ENCODE measurements at regions of chr10 and their contacts with region 1.

Region 1: DNA sequence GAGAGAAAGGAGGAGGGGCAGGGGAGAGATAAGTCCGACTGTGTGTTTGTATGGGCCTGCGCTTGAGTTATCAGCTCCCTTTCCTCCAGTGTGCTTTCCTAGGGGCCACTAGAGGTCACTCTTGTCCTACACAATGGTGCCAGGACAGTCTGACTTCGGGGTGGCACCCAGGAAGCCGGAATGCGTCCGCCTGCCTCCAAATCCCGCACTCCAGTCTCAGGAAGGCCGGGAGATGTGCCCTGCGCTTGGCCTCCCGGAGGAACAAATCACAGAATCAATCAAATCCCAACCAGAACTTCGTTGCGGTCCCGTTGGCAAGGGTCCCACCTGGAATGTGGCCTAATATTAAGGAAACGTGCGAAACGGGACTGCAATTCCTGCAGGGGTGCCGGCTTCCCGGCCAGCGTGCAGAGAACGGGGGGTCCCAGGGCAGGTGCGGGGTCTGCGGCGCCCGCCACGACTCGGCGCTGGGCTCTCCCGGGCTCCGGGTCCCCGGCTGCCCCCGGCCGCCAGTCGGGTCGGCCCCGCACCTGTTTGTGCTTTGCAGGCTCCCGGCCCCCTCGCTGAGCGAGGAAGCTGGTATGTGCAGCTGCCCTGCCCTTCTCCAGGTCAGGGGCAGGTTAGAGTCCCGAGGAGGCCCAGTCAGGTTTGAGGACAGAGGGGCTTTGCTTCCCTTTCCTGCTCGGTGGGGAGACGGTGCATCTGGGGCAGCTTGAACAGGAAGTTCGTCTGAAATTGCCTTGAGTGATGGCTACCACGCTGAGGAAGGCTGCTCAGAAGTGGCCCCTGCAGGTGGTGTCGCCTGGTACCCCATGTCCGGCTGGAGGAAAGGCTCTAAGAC is 21.0 kb upstream of the HPS1 start:
- DNase-seq: peak; percentile 56
- H3K4me3 ChIP-seq: peak overlapping the region in 2 of 3 experiments; percentile 27 to 45
- H3K27ac ChIP-seq: no peak overlapping the region
- H3K4me1 ChIP-seq: peaks cover 3% of the 10 kb centered on the region
- H3K27me3 ChIP-seq: no peaks in the 10 kb centered on the region
- CTCF ChIP-seq: peak; percentile 71 to 80
- POLR2A ChIP-seq: no peak

Region 2: GRCh38 chr10:98262571-98262970 is 205.2 kb before region 1 on chr10:
- CTCF ChIA-PET with region 1: interaction called, 12 read pairs
- POLR2A ChIA-PET with region 1: no interaction called
- dilution Hi-C with region 1: no loop called
- intact Hi-C with region 1: loop called (anchors 1 kb)
- DNase-seq: peak; percentile 38
- H3K4me3 ChIP-seq: no peak overlapping the region
- H3K27ac ChIP-seq: no peak overlapping the region
- H3K4me1 ChIP-seq: no peaks in the 10 kb centered on the region
- H3K27me3 ChIP-seq: no peaks in the 10 kb centered on the region
- CTCF ChIP-seq: peak; percentile 38 to 60
- POLR2A ChIP-seq: no peak

Region 3: DNA sequence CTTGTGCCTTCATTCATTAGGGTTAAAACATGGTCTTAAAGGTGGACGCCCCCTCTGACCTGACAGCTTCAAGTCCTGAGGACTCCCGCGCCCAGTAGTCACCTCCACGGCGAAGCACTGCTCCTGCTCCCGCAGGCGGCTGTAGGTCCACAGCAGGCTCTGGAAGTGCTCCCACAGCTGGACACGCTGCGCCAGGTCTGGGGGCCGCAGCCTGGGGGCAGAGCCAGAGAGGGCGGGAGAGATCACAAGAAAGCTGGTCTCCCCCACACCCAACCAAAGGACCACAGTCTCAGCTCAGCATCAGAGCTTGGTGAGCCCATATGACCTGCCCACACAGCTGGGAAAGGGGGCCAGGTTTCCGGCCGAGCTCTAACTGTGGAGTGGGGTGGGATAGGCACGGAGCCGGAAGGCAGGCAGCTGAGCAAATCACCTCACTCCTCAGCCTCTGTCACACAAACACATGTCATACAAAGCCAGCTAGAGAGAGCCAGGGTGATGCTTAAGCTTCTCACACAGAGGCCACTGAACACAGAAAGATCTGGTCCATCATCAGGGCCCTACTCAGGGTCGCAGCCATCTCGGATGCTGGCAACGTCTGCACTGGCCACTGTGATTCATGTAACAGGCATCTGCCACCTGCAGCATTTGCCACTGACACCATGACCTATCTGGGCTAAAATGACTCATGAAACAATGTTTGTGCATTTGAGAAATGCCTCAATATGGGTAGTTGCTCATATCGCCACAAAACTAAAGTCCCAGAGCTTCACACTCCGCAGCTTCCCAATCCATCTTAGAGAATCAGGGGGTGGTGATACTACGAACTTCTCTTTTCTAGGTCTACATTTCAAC is 33.6 kb before region 1 on chr10:
- CTCF ChIA-PET with region 1: interaction called, 19 read pairs
- POLR2A ChIA-PET with region 1: no interaction called
- dilution Hi-C with region 1: no loop called
- intact Hi-C with region 1: no loop called
- DNase-seq: peak; percentile 47
- H3K4me3 ChIP-seq: no peak overlapping the region
- H3K27ac ChIP-seq: peak overlapping the region; percentile 74
- H3K4me1 ChIP-seq: peaks cover 13% of the 10 kb centered on the region
- H3K27me3 ChIP-seq: no peaks in the 10 kb centered on the region
- CTCF ChIP-seq: no peak
- POLR2A ChIP-seq: no peak

Region 4: GRCh38 chr10:98664331-98665042 is 196.8 kb after region 1 on chr10:
- CTCF ChIA-PET with region 1: interaction called, 48 read pairs
- POLR2A ChIA-PET with region 1: no interaction called
- dilution Hi-C with region 1: no loop called
- intact Hi-C with region 1: loop called (anchors 1 kb)
- DNase-seq: peak; percentile 18
- H3K4me3 ChIP-seq: no peak overlapping the region
- H3K27ac ChIP-seq: no peak overlapping the region
- H3K4me1 ChIP-seq: no peaks in the 10 kb centered on the region
- H3K27me3 ChIP-seq: peaks cover 0 to 1% of the 10 kb centered on the region in 2 experiments
- CTCF ChIP-seq: peak; percentile 64 to 70
- POLR2A ChIP-seq: no peak

Region 5: DNA sequence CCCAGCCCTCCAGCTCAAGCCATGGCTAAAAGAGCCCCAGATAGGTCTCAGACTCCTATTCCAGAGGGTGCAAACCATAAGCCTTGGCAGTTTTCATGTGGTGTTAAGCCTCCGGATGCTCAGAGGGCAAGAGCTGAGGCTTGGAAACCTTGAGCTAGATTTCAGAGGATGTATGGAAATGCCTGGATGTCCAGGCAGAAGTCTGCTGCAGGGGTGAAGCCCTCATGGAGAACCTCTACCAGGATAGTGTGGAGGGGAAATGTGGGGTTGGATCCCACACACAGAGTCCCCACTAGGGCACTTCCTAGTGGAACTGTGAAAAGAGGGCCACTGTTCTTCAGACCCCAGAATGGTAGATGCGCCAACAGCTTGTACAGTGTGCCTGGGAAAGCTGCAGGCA is 781.1 kb after region 1 on chr10:
- CTCF ChIA-PET with region 1: interaction called, 220 read pairs
- POLR2A ChIA-PET with region 1: no interaction called
- dilution Hi-C with region 1: no loop called
- intact Hi-C with region 1: loop called (anchors 1 kb)
- DNase-seq: no peak
- H3K4me3 ChIP-seq: no peak overlapping the region
- H3K27ac ChIP-seq: no peak overlapping the region
- H3K4me1 ChIP-seq: no peaks in the 10 kb centered on the region
- H3K27me3 ChIP-seq: no peaks in the 10 kb centered on the region
- CTCF ChIP-seq: no peak
- POLR2A ChIP-seq: no peak

Region 6: DNA sequence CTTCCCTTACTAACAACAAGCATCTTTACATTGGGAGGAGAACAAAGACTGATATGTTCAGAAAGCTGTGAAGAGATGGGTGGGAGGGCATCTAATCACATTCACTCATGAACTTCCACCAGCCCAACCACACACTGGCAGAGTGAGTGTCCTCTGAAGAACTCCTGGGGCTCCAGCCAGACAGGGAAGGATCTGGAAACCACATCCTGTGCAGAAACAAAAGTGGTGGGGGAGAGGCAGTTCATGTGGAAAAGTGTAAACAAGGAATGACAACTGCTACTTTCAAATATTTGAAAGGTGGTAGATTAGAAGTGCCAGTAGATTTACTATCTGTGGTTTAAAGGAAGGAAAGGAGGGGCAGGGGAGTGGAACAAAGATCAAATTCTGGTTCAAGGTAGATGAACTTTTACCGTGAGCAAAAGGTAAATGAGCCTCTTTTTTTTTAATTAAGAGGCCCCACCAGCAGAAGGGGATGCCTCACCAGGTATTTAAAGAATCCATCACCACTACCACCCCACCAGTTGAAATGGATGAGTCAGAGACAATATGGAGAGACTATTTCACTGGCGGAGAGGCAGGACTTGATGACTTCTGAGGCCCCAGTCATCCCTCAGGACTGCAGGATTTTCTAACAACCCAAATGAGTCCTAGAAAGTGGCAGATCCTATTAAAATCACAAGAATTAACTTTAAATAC is 928.2 kb after region 1 on chr10:
- CTCF ChIA-PET with region 1: no interaction called
- POLR2A ChIA-PET with region 1: no interaction called
- dilution Hi-C with region 1: no loop called
- intact Hi-C with region 1: loop called (anchors 10 kb)
- DNase-seq: peak; percentile 57
- H3K4me3 ChIP-seq: no peak overlapping the region
- H3K27ac ChIP-seq: peak overlapping the region; percentile 32
- H3K4me1 ChIP-seq: peaks cover 24% of the 10 kb centered on the region
- H3K27me3 ChIP-seq: no peaks in the 10 kb centered on the region
- CTCF ChIP-seq: no peak
- POLR2A ChIP-seq: no peak